AG04450 (cell line): ENCODE measurements at regions of chr6 and their contacts with region 1.

Region 1: GRCh38 chr6:70706491-70707123 is 38.9 kb downstream of the SMAP1 start:
- DNase-seq: peak; percentile 16
- H3K4me3 ChIP-seq: no peak overlapping the region
- H3K27ac ChIP-seq: no peak overlapping the region
- H3K27me3 ChIP-seq: no peaks in the 10 kb centered on the region
- CTCF ChIP-seq: peak; percentile 51

Region 2: GRCh38 chr6:70196531-70196930 is 510.1 kb before region 1 on chr6:
- CTCF ChIA-PET with region 1: no interaction called
- POLR2A ChIA-PET with region 1: no interaction called
- DNase-seq: no peak
- H3K4me3 ChIP-seq: no peak overlapping the region
- H3K27ac ChIP-seq: no peak overlapping the region
- H3K27me3 ChIP-seq: no peaks in the 10 kb centered on the region
- CTCF ChIP-seq: no peak

Region 3: GRCh38 chr6:70717038-70717801 is 10.6 kb after region 1 on chr6:
- CTCF ChIA-PET with region 1: interaction called, 12 read pairs
- POLR2A ChIA-PET with region 1: no interaction called
- DNase-seq: no peak
- H3K4me3 ChIP-seq: no peak overlapping the region
- H3K27ac ChIP-seq: no peak overlapping the region
- H3K27me3 ChIP-seq: no peaks in the 10 kb centered on the region
- CTCF ChIP-seq: no peak

Region 4: GRCh38 chr6:70874181-70874913 is 167.7 kb after region 1 on chr6:
- CTCF ChIA-PET with region 1: interaction called, 12 read pairs
- POLR2A ChIA-PET with region 1: no interaction called
- DNase-seq: no peak
- H3K4me3 ChIP-seq: no peak overlapping the region
- H3K27ac ChIP-seq: no peak overlapping the region
- H3K27me3 ChIP-seq: peaks cover 3% of the 10 kb centered on the region
- CTCF ChIP-seq: no peak

Region 5: DNA sequence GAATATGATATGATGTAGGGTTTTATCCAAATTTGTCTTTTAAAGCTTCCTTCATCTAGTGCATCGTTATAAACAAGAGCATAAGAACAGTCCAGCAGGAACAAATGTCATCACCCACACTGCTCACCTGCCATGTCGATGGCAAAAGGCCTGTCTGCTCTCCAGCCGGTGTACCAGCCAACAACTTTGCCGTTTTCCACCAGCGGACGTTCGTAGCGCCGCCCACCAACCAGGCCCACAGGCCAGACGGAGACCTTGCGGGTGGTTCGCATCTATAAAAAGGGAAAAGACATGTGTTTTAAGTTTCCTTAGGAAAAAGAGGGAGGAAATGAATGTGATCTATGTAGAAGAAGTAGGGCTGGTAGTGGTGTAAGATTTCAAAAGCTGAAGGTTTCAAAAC is 187.4 kb after region 1 on chr6:
- CTCF ChIA-PET with region 1: interaction called, 11 read pairs
- POLR2A ChIA-PET with region 1: no interaction called
- DNase-seq: no peak
- H3K4me3 ChIP-seq: no peak overlapping the region
- H3K27ac ChIP-seq: no peak overlapping the region
- H3K27me3 ChIP-seq: peaks cover 3% of the 10 kb centered on the region
- CTCF ChIP-seq: no peak

Region 6: DNA sequence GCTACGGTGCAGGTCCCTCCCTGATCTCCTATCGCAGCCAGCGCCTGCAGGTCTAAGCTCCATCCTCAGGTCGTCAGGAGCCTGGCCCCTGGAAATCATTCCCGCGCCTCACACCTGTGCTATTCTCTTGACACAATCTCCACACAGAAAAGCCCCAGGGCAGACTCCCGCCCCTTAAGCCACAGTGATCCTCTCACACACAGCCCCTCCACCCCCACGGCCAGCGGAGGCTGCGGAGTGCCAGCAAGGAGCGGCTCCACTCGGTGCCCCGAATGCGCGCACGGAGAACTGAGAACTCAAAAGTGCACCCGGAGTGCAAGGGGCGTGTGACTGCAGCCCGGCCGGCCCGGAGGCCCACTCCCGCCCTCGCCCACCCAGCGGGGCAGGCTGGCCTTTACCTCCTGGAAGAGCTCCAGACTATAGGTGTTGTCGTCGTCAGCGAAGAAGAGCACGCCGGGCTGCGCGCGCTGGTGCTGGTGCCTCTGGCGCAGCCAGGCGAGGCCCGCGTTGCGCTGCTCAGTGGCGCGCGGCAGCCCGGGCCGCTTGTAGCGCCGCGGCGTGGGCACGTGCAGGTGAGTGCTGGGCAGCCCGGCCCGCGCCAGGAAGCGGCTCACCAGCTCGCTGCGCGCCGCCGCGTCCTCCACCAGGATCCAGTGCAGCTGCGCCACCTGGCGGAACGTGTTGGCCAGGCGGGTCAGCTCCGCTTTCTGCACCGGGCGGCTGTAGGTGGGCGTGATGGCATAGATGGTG is 249.0 kb after region 1 on chr6:
- CTCF ChIA-PET with region 1: interaction called, 14 read pairs
- POLR2A ChIA-PET with region 1: no interaction called
- DNase-seq: peak; percentile 27
- H3K4me3 ChIP-seq: peak overlapping the region; percentile 49
- H3K27ac ChIP-seq: no peak overlapping the region
- H3K27me3 ChIP-seq: peaks cover 48% of the 10 kb centered on the region
- CTCF ChIP-seq: peak; percentile 78

Region 7: DNA sequence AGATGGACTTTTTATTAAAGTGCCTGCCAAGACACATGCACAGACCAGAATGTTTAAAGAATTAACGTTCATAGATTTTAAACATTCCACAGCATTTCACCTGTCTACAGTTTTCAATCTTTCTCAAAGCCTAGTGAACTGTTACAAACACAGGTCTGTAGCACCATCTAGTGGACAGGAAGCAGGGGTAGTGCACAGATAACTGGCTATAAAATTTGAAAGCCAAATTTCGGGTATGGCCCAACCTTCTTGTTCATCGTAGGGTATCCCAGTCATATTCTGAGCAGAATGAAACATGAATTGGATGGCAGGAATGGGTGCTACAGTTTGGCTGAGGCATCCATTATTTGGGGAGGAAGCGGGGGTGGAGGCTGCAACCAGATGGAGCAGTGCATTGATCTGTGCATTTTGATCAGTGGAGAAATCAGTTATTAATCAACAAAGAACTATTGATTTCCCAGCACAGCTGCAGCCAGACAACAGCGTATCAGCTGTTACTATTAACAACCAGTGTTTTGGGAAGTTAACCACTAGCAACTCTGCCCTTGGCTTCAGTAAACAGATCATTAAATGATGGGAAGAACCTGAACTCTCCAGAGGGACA is 306.4 kb after region 1 on chr6:
- CTCF ChIA-PET with region 1: interaction called, 13 read pairs
- POLR2A ChIA-PET with region 1: no interaction called
- DNase-seq: no peak
- H3K4me3 ChIP-seq: no peak overlapping the region
- H3K27ac ChIP-seq: no peak overlapping the region
- H3K27me3 ChIP-seq: no peaks in the 10 kb centered on the region
- CTCF ChIP-seq: peak; percentile 84